Posterior cingulate gyrus (tissue), 11 donors: ENCODE measurements at regions of chr7 and their contacts with region 1.

Region 1: DNA sequence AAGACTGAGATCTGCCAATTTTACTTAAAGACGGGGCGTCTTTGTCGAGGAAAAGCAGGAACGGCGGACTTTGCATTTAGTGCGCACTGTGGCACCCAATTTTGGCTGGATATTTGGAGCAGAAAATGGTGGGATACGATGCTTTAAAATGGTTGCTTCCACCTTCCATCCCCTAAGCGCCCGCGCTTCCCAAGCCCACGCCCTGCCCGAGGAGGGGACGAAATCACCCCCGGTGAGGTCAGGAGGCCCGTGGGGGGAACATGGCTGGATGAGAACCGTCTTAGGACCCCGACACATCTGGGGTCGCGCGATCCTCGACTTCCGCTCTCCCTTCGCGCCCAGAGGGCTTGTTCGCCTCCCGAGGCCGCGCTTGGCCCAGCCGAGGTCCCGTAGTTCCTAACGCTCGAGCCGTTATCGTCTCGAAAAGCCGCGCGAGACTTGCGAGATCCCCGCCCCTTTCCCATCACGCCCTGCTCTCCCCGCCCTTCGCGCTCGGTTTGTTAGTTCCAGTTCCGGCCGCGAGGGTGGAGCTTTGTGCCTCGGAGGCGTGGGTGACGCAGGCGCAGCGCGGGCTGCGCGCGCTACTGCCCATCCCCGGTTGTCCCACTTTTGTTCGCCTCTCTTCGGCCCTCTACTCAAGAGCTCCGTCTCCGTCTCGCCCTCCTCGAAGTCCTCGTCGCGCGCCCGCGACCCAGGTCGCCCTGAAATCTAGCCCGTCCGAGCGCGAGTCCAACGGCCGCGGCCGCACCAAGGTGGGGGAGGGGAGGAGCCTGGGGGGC is at the start of gene SRRT:
- DNase-seq: peak; percentile 98 to 100 (median 99)

Region 2: DNA sequence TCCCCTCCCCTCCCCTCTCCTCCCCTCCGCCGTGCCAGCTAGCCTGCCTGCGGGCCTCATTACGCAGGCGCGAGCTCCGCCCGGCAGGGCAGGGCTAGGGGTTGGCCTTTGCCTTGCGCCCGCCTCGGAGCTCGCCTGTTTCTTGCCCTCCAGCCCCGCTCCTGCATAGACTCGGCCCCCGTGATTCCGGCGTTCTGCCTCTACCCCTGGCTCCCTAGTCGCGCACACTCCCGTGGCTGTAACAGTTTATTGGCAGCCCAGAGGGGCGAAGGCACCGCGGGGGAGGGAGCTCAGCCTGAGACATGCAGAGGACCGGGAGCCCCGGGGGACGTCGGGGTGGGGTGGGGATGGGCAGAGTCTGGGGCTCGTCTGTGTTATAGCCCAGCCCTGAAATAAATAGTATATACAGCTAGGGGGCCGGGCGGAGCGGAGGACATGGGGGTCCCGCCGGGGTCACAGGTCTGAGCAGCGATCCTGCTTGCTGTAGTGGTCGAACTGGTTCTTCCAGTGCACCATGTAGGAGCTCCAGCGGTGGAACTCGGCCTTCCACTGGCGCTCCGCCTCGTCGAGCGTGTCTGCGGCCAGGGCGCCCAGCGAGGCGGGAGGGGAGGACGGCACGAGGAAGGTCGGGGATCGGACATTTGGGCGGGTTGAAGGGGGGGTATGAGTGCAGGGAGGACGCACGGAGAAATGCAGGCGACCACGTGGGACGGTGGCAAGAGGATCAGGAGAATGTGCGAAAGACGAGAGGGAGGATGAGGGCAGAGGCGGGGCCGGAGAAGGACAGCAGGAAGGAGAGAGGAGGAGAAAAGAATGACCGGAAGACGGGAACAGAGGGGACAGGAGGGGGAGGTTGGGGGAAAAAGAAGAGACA is 15.2 kb after region 1 on chr7:
- intact Hi-C with region 1: loop called (anchors 2 kb)
- DNase-seq: peak; percentile 88 to 99 (median 95)